Adrenal gland (tissue), 19 donors: ENCODE measurements at regions of chr1 and their contacts with region 1.

Region 1: DNA sequence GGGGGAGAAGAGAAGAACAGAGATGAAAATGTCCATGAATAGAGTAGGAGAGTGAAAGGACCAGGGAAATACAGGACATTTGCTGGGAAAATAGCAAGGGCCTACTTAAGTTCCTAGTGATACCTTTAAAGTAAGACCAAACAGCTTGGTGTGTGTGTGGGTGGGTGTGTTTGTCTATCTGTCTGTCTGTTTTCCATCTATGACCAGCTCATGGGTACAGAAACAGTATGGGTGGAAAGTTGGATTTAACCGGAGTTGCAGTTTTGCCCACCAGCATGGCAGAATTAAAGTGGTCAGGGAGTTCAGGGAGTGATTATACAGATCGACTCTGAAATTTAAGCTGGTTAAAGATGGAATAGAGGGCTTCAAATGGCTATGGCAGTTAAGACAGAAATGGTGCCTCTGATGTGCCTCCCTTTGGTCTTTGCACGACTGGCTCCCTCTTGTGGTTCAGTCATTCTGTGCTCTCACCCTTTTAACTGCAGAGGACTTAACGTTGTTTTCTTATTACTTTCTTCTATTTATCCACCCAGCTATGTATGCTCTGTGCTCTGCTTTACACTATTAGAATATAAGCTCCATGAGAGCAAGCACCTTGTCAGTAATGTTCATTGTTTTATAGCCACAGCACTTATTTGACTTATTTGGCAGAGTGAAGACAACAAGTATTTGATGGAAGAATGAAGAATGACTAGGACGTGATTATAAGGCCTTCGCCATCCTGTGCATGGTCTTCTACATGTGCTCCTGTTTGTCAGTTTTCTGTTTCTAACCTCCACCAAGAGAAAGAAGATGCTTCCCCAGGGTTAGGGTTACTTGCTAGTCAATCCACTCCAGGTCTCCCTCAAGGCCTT is 72.7 kb upstream of the AK4 start:
- DNase-seq: peak; percentile 62 to 81 (median 69)
- H3K4me3 ChIP-seq: no peak overlapping the region
- H3K27ac ChIP-seq: no peak overlapping the region
- H3K4me1 ChIP-seq: no peaks in the 10 kb centered on the region
- H3K27me3 ChIP-seq: no peaks in the 10 kb centered on the region
- CTCF ChIP-seq: peak; percentile 65 to 79 (median 75)
- POLR2A ChIP-seq: no peak

Region 2: DNA sequence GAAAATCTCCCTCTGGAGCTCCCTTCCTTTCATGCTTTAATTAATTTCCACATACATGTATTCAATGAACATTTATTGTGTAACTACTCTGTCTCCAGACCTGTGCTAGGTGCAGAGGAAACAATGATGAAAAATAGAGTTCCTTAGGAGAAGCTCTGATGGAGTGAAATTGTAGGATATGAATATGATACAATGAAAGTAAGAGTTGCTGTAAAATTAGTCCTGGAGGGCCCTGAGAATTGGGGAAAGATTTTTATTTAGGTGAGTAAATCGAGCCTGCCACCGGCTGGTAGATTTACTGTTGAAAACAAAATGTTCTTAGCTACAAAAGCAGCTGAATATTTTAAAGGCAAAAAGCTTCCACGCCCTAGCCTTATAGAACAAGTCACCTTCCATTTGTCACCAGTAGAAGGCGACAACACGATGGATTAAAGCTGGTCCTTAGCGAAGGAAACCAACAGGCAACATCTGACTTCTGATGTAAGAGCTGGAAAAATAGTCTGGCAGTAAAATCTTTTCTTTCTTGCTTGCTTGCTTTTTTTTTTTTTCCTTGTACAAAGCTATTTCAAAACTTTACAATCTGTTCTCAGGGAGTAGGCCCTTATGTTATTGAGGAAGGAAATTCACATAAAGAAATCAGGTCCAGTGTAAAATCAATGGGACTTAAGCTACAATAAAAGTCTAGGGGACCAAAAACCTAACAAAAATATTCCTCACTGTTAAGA is 1383.5 kb before region 1 on chr1:
- intact Hi-C with region 1: no loop called
- DNase-seq: peak; percentile 57 to 79 (median 64)
- H3K4me3 ChIP-seq: no peak overlapping the region
- H3K27ac ChIP-seq: no peak overlapping the region
- H3K4me1 ChIP-seq: peaks cover 0 to 4% of the 10 kb centered on the region in 2 donors
- H3K27me3 ChIP-seq: no peaks in the 10 kb centered on the region
- CTCF ChIP-seq: peak; percentile 61 to 84 (median 80)
- POLR2A ChIP-seq: no peak

Region 3: DNA sequence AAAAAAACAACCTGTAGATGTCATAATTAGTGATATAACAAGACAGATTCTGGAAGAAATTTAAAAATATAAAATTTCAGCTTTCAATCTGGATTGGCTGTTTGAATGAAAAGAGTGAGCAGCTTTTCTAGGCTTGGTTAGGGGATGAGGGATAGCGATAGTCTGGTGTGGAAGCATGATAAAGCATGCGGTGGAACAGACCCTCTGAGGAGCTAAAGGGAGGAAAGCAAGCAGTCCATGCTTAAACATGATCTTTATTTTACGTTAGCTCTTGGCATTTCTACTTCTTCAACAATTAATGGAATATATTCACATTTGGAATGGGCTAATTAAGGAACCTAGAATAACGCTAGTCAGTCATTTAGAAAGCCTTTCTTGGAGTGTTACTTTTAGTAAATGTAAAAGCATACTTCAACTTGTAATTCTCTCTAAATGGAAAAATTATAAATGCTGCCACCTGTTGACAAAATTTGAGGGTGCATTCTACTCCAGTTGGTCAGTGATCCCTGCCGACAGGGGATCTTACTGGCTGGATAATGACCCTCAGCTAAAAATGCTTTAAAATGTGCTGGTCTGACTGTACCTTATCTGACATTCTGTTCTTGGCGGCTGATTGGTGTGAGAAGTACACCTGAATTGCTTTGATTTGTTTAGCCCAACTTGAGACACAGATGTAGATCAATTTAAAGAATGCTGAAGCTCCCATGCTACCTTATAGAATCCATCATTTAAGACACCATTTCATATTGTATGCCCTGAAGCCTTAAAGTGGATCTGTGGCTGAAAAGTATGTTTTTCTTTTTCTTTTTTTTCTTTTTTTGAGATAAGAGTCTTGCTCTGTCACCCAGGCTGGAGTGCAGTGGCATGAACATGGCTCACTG is 133.9 kb after region 1 on chr1:
- intact Hi-C with region 1: loop called in 1 of 2 experiments (anchors 5 kb)
- DNase-seq: peak in 5 of 7 donors; percentile 17 to 39 (median 25)
- H3K4me3 ChIP-seq: no peak overlapping the region
- H3K27ac ChIP-seq: no peak overlapping the region
- H3K4me1 ChIP-seq: no peaks in the 10 kb centered on the region
- H3K27me3 ChIP-seq: no peaks in the 10 kb centered on the region
- CTCF ChIP-seq: peak; percentile 37 to 70 (median 58)
- POLR2A ChIP-seq: no peak

Region 4: GRCh38 chr1:65292861-65293593 is 217.7 kb after region 1 on chr1:
- intact Hi-C with region 1: no loop called
- DNase-seq: no peak
- H3K4me3 ChIP-seq: no peak overlapping the region
- H3K27ac ChIP-seq: no peak overlapping the region
- H3K4me1 ChIP-seq: no peaks in the 10 kb centered on the region
- H3K27me3 ChIP-seq: no peaks in the 10 kb centered on the region
- CTCF ChIP-seq: no peak
- POLR2A ChIP-seq: no peak